Right ventricle myocardium inferior (tissue), 1 donor: ENCODE measurements at regions of chr17 and their contacts with region 1.

Region 1: DNA sequence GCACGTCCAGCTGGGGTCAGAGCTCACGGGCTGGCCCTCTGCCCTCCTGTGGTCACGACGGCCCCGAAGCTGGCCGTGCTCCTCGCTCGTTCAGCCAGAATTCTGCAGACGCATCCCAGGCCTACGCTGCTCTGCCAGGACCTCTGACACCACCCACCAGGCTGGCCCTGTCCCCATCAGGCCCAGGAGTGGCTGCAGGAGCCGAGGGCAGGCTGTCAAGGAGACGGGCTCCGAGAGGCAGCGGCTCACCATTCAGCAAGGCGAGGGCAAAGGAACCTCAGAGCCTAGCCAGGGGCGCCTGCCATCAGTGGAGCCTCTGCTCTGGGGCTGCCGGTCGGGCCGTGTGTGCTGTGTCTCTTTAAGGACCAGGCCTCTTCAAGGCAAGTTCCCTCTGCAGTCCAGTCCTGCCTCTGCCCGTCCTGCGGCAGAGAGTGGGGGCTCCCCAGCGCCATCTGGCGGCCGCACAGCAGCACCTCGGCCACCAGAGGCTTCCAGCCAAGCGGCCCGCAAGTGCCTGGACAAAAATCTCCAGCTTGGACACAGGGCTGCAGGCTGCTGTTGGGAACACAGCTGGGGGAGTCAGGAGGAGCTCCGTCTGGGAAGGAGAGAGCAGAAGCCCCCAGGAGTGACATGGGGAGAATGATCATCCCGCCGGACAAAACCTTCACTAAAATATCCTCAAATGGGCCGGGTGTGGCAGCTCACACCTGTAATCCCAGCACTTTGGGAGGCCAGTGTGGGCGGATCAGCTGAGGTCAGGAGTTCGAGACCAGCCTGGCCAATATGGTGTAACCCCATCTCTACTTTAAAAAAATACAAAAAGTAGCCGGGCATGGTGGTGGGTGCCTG is 7.4 kb upstream of the ABR start:
- DNase-seq: peak; percentile 94
- ATAC-seq: peak; percentile 93

Region 2: DNA sequence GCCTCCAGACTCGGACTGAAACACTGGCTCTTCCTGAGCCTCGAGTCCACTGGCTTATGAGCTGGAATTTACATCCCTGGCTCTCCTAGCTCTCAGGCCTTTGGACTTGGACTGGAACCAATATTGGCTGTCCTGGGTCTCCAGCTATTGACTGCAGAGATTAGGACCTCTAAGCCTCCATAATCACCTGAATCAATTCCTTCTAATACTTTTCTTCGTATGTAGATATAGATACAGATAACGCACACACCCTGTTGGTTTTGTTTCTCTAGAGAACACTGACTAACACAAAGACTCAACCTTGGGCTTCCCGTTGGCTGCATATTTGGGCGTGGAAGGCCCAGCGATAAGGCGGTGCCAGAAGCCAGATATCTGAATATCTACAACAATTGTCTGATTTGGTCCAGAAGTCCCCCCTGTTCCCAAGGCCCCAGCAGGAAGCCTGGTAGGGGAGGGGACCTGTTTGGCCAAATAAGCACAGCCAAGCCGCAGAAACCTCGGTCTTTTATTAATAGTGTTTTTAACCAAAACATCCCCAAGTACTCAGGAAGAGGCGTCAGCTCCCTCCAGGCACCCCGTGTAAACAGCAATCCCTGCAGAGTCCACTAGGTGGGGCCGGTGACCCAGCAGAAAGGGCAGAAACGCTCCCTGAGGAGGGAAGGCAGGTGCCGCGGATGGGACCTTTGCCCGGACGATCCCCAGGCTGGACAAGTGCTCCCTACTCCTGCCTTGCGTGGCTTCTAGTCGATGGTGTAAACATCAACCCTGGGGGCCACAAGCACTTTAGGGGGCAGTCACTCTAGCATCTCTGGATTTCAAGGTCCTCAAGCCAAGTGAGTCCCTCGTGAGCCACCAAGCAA is 64.4 kb before region 1 on chr17:
- intact Hi-C with region 1: loop called (anchors 1 kb)
- DNase-seq: peak; percentile 93
- ATAC-seq: peak; percentile 78

Region 3: DNA sequence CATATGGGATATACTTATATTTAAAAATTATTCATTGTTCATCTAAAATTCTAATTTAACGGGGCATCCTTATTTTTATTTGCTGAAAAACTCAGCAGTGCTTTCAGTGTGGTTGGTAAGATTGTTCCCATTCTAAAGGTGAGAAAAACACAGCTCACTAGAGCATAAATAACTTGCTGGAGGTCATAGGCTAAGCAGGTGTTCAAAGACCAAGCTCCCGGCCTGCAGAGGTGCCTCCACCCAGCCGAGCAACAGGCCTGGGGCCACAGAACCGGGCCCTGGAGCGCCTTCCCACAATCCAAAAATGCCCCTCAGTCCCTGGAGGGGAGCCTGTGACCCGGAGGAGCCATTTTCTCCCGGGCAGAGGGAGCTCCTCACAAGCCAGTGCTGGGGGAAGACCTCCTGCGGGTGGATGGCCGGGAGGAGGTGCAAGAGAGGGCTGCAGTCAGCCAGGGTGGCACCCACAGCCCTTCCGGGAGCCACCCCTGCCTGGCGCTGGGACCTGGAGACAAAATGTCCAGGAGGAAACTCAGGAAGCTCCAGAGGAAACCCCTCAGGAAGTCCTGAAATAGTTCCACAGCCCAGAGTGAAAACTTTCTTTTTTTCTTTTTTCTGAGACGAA is 22.1 kb before region 1 on chr17:
- intact Hi-C with region 1: loop called (anchors 1 kb)
- DNase-seq: peak; percentile 70
- ATAC-seq: peak; percentile 62

Region 4: DNA sequence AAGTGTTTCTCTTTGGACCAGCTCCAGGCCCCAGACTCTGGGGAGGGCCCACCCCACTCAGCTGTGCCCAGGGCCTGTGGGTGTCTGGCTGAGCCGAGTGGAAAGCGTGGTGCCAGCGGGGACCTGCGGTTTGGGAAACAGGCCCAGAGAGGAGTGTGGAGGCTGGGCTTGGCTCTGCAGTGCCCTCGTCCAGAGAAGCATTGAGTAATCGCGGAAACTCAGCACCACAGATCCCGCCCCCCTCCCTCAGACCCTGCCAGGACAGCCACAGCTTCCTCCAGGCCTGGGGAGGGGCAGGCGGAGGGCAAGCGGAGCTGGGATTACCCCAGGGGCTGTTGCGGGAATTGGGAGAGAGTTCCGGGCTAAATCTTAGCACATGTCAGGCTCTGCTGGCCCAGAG is 390.0 kb after region 1 on chr17:
- intact Hi-C with region 1: no loop called
- DNase-seq: peak; percentile 93
- ATAC-seq: peak; percentile 92